Activated CD4-positive, alpha-beta T cell treated with anti-CD3 and anti-CD28 coated beads for 36 hours (primary cell): ENCODE measurements at regions of chr1 and their contacts with region 1.

Region 1: GRCh38 chr1:10209905-10210810 is at the start of gene KIF1B:
- DNase-seq: peak; percentile 97
- ATAC-seq: peak; percentile 98
- H3K4me3 Mint-ChIP-seq: peak within 1 kb of the TSS; percentile 76
- H3K27ac Mint-ChIP-seq: peak within 1 kb of the TSS; percentile 74
- H3K4me1 Mint-ChIP-seq: peaks cover 31% of the 10 kb centered on the region
- H3K27me3 Mint-ChIP-seq: no peaks in the 10 kb centered on the region
- total RNA-seq, gene KIF1B: 12.3 to 13.5 TPM

Region 2: GRCh38 chr1:9671377-9672140 is 538.6 kb before region 1 on chr1:
- CTCF ChIA-PET with region 1: no interaction called
- POLR2A ChIA-PET with region 1: no interaction called
- intact Hi-C with region 1: no loop called
- DNase-seq: peak; percentile 51
- ATAC-seq: peak; percentile 82
- H3K4me3 Mint-ChIP-seq: no peak overlapping the region
- H3K27ac Mint-ChIP-seq: peak overlapping the region; percentile 86
- H3K4me1 Mint-ChIP-seq: peaks cover 75% of the 10 kb centered on the region
- H3K27me3 Mint-ChIP-seq: no peaks in the 10 kb centered on the region

Region 3: GRCh38 chr1:10170239-10170574 is 40.0 kb before region 1 on chr1:
- CTCF ChIA-PET with region 1: interaction called, 9 read pairs
- POLR2A ChIA-PET with region 1: no interaction called
- intact Hi-C with region 1: loop called (anchors 1 to 5 kb)
- DNase-seq: peak; percentile 48
- ATAC-seq: peak; percentile 89
- H3K4me3 Mint-ChIP-seq: peak overlapping the region; percentile 31
- H3K27ac Mint-ChIP-seq: peak overlapping the region; percentile 93
- H3K4me1 Mint-ChIP-seq: peaks cover 46% of the 10 kb centered on the region
- H3K27me3 Mint-ChIP-seq: no peaks in the 10 kb centered on the region

Region 4: DNA sequence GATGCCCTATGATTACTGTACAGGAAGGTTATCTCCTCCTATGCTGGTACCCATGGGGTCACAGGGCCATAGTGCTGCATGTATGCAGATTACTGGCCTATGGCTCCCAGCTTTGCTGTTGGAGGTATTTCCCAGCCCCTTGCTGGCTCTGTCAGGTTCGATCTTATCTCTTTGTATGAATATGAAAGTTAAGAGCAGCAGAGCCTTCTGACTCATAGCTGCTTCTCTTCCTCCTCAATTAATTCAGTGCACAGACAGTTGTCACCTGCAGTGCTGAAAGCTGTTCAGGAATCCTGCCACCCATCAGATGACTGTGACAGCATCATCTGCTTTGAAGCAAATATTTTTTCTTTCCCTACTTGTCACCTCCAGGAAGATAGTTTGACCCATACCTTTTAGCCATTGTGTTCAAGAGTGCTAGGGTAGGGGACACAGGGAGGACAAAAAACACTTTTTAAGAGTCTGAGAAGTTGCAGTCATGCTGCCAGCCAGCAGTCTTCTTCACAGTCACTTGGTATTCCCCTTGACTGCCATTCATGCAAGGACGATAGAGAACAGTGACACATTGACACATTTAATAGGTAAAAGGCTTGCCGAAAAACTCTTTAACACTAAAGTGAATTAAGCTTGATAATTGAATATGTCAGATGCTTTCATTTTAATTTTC is 73.3 kb after region 1 on chr1:
- CTCF ChIA-PET with region 1: interaction called, 5 read pairs
- POLR2A ChIA-PET with region 1: no interaction called
- intact Hi-C with region 1: loop called (anchors 1 to 2 kb)
- DNase-seq: peak; percentile 62
- ATAC-seq: peak; percentile 94
- H3K4me3 Mint-ChIP-seq: no peak overlapping the region
- H3K27ac Mint-ChIP-seq: peak overlapping the region; percentile 26
- H3K4me1 Mint-ChIP-seq: peaks cover 30% of the 10 kb centered on the region
- H3K27me3 Mint-ChIP-seq: no peaks in the 10 kb centered on the region

Region 5: GRCh38 chr1:10338047-10338446 is 127.9 kb after region 1 on chr1:
- CTCF ChIA-PET with region 1: interaction called, 7 read pairs
- POLR2A ChIA-PET with region 1: no interaction called
- intact Hi-C with region 1: loop called (anchors 1 to 2 kb)
- DNase-seq: peak; percentile 69
- ATAC-seq: peak; percentile 86
- H3K4me3 Mint-ChIP-seq: no peak overlapping the region
- H3K27ac Mint-ChIP-seq: no peak overlapping the region
- H3K4me1 Mint-ChIP-seq: no peaks in the 10 kb centered on the region
- H3K27me3 Mint-ChIP-seq: no peaks in the 10 kb centered on the region

Region 6: DNA sequence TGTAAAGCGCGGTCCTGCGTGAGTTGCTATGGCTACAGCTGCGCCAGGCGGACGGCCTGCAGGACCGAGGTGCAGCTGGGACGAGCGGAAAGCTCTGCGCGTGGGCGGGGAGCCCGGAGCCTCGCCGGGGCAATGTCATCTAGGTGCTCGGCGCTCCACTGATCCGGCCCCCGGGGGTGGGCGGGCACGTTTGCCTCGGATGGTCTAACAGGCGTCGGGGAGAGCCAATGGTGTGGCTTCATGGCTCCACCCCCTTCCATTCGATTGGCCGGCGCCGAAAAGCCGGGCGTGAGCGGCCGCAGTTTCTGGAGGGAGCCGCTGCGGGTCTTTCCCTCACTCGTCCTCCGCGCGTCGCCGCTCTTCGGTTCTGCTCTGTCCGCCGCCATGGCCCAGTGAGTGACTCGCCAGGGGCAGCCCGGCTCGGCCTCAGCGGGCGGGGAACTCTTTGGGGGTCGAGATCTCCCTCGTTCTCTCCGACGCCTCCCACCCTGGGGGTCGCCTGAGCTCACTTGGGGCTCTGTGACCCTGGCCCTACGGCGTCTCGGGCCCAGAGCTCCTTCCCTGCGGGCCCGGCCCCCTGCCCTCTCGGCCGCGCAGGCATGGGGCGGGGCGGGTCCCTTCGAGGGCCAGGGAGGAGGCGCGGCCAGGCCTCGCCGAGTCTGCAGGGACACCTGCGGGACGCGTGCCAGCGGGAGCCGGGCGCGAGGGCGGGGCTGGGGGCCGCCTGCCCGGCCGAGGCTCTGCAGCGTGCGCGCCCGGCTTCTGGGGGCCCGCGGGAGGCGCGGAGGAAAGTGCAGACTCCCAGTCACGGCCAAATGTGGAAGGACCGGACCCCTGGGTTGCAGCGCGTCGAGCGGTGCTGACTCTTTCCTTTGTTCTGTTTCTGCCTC is 188.8 kb after region 1 on chr1 and contains the start of gene PGD:
- CTCF ChIA-PET with region 1: interaction called, 4 read pairs
- POLR2A ChIA-PET with region 1: no interaction called
- intact Hi-C with region 1: loop called in 1 of 2 experiments (anchors 1 kb)
- DNase-seq: peak; percentile 99
- ATAC-seq: peak; percentile 97
- H3K4me3 Mint-ChIP-seq: peak within 1 kb of the TSS; percentile 86
- H3K27ac Mint-ChIP-seq: peak within 1 kb of the TSS; percentile 78
- H3K4me1 Mint-ChIP-seq: peaks cover 31% of the 10 kb centered on the region
- H3K27me3 Mint-ChIP-seq: no peaks in the 10 kb centered on the region
- total RNA-seq, gene PGD: 91.6 to 93.7 TPM

Region 7: GRCh38 chr1:10472220-10473144 is 262.3 kb after region 1 on chr1 and contains the start of gene DFFA:
- CTCF ChIA-PET with region 1: no interaction called
- POLR2A ChIA-PET with region 1: no interaction called
- intact Hi-C with region 1: loop called in 1 of 2 experiments (anchors 1 kb)
- DNase-seq: peak; percentile 96
- ATAC-seq: peak; percentile 83
- H3K4me3 Mint-ChIP-seq: peak within 1 kb of the TSS; percentile 97
- H3K27ac Mint-ChIP-seq: peak within 1 kb of the TSS; percentile 92
- H3K4me1 Mint-ChIP-seq: peaks cover 38% of the 10 kb centered on the region
- H3K27me3 Mint-ChIP-seq: no peaks in the 10 kb centered on the region
- total RNA-seq, gene DFFA: 45.7 to 46.4 TPM